ENCODE measurements at regions of chr5 and their contacts with region 1.

Region 1: DNA sequence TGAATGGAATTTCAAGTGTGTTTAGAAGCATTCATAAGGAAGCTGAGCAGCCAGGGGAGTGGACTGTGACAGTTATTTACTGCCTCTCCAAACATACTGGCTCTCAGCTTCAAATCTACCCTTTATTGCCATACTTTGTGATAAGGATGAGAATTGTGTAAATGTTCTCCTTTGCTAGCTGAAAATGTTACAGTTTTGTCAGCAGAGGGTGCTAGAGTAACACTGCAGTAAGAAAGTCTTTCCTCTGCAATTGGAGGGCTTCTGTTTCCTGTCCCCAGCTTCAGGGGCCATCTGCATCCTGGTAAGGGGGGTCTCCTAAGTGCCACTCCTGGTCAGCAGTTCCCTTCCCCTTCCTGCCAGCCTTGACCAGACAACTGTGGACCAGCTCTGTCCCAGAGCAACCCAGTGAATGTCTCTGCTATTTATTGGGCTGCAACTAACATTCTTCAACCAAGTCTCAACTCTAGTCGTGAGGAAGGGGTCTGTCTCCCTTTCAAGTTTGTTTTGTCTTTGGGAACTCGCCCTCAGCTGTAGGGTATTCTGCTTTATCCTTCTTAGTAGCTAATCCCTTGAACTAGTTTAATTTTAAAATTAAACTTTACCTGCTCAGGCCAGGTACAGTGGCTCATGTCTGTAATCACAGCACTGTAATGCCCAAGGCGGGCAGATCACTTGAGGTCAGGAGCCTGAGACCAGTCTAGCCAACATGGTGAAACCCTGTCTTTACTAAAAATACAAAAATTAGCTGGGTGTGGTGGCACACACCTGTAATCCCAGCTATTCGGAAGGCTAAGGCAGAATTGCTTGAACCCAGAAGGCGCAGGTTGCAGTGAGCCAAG is 45.3 kb downstream of the RAPGEF6 start:
- DNase-seq: peak; percentile 14
- ATAC-seq: peak; percentile 66
- H3K4me3 Mint-ChIP-seq: no peak overlapping the region
- H3K27ac Mint-ChIP-seq: no peak overlapping the region
- H3K4me1 Mint-ChIP-seq: peaks cover 46% of the 10 kb centered on the region
- H3K27me3 Mint-ChIP-seq: no peaks in the 10 kb centered on the region
- CTCF ChIP-seq: peak; percentile 86

Region 2: DNA sequence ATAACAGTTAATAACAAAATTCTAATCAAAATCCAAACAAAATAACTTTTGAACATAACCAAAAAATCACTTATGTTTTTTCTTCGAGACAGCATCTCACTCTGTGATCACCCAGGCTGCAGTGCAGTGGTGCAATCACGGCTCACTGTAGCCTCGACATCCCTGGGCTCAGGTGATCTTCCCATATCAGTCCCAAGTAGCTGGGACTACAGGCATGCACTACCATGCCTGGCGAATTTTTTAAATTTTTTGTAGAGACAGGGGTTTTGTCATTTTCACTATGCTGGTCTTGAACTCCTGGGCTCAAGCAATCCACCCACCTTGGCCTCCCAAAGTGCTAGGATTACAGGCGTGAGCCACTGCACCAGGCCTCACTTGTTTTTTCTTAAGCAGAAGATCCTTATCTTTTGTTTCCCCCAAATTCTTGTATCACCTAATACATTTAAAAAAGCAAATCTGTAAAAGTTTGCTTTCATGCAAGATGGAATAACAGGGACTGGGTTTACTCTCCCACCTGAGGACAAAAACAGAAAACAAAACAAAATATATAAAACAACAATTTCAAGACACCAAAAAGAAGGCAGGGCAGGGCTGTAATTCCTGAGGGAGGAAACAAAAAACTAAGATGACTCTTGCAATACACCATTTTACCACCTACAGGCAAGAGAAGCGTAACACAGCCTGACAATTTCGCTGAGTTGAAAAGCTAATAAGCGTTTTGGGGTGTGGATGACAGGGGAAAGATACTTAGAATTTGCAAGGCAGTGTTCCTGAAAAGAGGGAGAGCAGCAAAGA is 26.1 kb before region 1 on chr5:
- CTCF ChIA-PET with region 1: interaction called, 20 read pairs
- POLR2A ChIA-PET with region 1: no interaction called
- intact Hi-C with region 1: no loop called
- DNase-seq: no peak
- ATAC-seq: no peak
- H3K4me3 Mint-ChIP-seq: no peak overlapping the region
- H3K27ac Mint-ChIP-seq: no peak overlapping the region
- H3K4me1 Mint-ChIP-seq: peaks cover 34% of the 10 kb centered on the region
- H3K27me3 Mint-ChIP-seq: no peaks in the 10 kb centered on the region
- CTCF ChIP-seq: no peak

Region 3: DNA sequence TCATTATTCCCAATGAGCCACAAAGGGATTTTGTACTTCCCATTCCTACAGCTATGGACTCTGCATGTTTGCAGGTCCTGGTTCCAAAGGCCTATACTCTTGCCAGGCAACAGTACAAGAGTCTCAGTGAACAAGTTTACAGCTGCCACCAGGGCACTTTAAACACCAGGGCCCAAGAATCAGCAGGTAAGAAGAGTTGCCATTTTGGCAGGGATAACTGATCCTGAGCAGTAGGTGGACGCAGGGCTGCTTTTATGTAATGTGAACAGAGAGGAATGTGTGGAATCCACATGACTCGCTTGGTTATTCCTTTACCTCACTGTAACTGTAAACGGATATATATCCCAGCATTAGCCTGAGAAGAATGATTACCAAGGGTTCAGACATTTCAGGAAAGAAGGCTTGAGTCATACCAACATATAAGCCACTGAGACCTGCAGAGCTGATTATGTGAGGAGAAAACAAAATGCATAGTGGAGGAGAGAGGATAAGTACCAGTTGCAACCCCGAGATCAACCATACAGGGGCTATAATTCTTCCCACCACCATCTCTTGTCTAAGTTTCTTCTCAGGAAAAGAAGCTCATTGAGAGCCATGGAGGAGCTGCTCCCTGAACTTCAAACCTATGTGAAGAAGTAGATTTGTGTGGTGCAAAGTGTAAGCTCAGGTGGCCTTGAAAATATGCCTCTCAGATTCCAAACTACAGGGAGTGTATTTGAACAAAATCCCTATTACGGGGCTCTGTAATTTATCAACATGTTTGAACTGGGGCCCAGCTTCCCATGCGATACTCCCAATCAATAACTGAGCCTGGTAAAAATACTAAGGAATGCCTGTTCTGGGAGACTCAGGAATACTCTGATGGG is 20.7 kb after region 1 on chr5:
- CTCF ChIA-PET with region 1: interaction called, 14 read pairs
- POLR2A ChIA-PET with region 1: no interaction called
- intact Hi-C with region 1: no loop called
- DNase-seq: no peak
- ATAC-seq: no peak
- H3K4me3 Mint-ChIP-seq: no peak overlapping the region
- H3K27ac Mint-ChIP-seq: no peak overlapping the region
- H3K4me1 Mint-ChIP-seq: peaks cover 54% of the 10 kb centered on the region
- H3K27me3 Mint-ChIP-seq: no peaks in the 10 kb centered on the region
- CTCF ChIP-seq: no peak

Region 4: DNA sequence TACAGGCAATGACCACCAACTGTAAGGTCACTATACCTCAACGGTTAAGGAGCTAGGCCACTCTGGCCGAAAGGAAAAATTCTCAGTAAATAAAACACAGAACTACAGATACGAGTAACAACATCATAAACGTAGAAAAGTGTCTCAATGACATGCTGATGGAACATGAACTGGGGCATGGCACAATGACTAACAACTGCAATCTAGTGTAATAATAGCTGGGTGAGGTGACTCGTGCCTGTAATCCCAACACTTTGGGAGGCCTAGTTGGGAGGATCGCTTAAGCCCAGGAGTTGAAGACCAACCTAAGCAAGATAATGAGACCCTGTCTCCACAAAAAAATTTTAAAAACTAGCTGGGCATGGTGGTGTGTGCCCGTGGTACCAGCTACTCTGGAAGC is 55.1 kb after region 1 on chr5:
- CTCF ChIA-PET with region 1: interaction called, 10 read pairs
- POLR2A ChIA-PET with region 1: no interaction called
- intact Hi-C with region 1: no loop called
- DNase-seq: no peak
- ATAC-seq: no peak
- H3K4me3 Mint-ChIP-seq: no peak overlapping the region
- H3K27ac Mint-ChIP-seq: no peak overlapping the region
- H3K4me1 Mint-ChIP-seq: peaks cover 11% of the 10 kb centered on the region
- H3K27me3 Mint-ChIP-seq: no peaks in the 10 kb centered on the region
- CTCF ChIP-seq: no peak

Region 5: DNA sequence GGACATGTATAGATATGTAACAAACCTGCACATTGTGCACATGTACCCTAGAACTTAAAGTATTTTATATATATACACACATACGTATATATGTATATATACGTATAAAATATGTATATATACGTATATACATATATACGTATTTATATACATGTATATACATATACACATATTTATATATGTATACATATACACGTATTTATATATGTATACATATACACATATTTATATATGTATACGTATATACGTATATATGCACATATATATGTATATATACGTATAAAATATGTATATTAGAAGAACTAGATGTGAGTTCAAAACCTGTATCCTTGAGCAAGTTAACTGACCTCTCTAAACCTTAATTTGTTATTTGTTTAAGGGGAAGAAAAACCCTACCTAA is 145.7 kb after region 1 on chr5:
- CTCF ChIA-PET with region 1: no interaction called
- POLR2A ChIA-PET with region 1: no interaction called
- intact Hi-C with region 1: no loop called
- DNase-seq: no peak
- ATAC-seq: no peak
- H3K4me3 Mint-ChIP-seq: no peak overlapping the region
- H3K27ac Mint-ChIP-seq: no peak overlapping the region
- H3K4me1 Mint-ChIP-seq: no peaks in the 10 kb centered on the region
- H3K27me3 Mint-ChIP-seq: no peaks in the 10 kb centered on the region
- CTCF ChIP-seq: no peak

Region 6: DNA sequence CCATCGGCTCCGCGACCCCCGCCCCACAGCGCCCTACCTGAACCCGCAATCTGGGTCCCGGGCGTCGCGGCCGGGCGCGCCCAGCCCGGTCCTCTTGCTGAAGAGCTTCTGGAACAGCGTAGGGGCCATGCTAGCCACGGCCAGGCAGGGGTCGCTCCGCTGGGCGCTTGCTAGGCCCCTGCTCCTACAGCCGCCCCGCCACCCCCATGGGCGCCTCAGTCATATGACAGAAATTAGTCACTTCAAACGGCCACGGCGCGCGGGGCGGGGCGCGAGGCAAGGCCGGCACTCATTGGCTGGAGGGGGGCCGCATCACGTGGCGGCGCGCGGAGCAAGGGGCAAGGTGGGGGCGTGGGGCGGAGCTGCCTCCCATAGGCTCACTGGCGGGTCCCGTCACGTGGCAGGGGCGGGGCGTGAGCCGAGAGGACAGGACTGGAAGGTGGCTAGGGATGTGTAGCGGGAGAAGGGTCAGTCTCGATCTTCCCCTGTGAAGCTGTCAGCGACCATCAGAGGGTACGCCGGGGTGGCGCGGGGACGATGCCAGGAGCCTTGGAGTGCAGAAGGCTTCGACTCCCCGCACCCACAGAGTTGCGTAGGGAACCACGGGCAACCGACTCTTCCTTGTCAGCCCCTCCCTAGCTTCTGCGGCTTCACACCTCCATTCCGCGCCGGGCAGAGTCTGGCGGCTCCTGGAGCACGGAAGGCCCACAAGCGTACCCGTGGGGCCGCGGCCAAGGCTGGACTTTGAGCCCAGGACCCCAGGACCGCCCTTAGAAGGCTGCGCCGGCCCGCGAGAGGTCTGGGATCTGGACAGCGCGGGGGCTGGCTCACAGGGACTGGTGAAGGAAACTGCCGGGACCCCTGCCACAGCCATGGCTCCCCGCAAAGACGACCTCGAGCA is 207.3 kb after region 1 on chr5 and contains the start of gene FNIP1:
- CTCF ChIA-PET with region 1: interaction called, 6 read pairs
- POLR2A ChIA-PET with region 1: no interaction called
- intact Hi-C with region 1: loop called (anchors 10 kb)
- DNase-seq: peak; percentile 99
- ATAC-seq: peak; percentile 97
- H3K4me3 Mint-ChIP-seq: peak within 1 kb of the TSS; percentile 94
- H3K27ac Mint-ChIP-seq: peak within 1 kb of the TSS; percentile 92
- H3K4me1 Mint-ChIP-seq: peaks cover 30% of the 10 kb centered on the region
- H3K27me3 Mint-ChIP-seq: no peaks in the 10 kb centered on the region
- CTCF ChIP-seq: no peak
- total RNA-seq, gene FNIP1: 15.9 to 16.0 TPM

Region 7: DNA sequence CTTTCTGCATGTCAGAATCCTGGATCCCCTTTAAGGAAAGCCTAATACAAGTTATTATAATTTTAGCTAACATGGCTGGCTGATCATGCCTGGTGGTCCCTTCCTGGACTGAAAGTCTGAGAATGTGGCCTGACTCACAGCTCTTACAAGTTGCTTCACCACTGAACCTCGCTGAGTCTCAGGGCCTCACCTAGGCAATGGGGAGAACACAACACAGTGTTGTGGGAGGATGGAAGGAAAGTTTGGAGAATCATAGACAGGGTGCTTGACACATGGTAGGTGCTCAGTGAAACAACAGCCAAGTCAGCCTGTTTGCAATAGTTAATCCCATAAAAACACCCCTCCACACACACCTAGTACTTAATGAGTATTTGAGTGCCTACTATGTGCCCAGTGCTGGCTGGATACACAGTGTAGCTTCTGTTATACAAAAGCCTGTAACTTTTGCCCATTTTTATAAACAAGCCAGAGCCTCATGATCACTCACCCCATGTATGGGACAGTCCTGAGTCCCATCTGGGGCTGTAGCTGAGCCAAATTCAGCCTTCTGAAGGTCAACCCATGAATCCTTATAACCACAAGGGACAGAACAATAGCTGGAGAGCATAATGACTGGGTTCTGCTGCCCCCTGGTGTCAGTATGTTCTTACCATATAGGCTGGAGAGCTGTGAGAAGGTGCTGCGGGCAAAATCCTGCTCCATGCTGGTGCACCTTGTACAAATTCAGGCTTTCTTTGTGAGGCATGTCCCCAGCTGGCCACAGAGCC is 417.9 kb after region 1 on chr5:
- CTCF ChIA-PET with region 1: interaction called, 143 read pairs
- POLR2A ChIA-PET with region 1: no interaction called
- intact Hi-C with region 1: loop called (anchors 2 kb)
- DNase-seq: peak; percentile 93
- ATAC-seq: peak; percentile 72
- H3K4me3 Mint-ChIP-seq: no peak overlapping the region
- H3K27ac Mint-ChIP-seq: no peak overlapping the region
- H3K4me1 Mint-ChIP-seq: peaks cover 24% of the 10 kb centered on the region
- H3K27me3 Mint-ChIP-seq: peaks cover 22% of the 10 kb centered on the region
- CTCF ChIP-seq: peak; percentile 88

Measured in activated CD8-positive, alpha-beta T cell treated with anti-CD3 and anti-CD28 coated beads for 36 hours (primary cell).